ENCODE measurements at regions of chr12 and their contacts with region 1.

Region 1: DNA sequence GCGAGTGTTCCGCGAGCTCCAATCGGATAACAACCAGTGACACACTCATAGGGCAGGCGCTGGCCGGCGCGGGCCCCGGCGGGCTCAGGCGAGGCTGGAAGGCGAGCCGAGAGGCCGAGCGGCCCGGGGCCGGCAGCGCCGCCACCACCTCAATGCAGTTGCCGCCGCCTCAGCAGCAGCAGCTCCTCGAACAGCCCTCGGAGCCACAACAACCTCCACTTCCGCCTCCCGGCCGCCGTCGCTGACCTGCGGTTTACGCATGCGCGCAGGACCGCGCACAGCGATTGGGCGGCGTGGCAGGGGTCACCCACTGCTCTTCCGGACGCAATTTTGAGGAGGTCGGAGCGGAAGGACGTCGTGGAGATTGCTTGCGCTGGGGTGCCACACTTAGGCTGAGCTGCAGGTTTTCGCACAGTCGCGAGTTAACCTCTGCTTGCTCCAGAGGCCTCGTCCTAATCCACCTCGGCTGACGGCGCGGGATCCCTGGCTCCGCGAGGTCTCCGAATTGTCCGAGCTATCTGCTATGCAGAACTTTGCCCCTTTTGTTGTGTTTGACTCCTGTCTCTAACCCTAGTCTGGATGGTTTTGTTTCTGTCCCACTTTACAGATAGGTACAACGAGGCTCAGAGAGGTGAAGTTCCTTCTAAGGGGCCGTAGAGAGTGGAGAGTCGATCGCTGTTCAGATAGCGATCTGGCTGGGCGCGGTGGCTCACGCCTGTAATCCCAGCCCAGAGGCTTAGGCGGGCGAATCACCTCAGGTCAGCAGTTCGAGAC is at the starts of genes ACAD10 and BRAP:
- DNase-seq: peak; percentile 97
- ATAC-seq: peak; percentile 95
- H3K4me3 ChIP-seq: peak within 1 kb of the TSS; percentile 76 to 96 (median 95)
- H3K4me3 Mint-ChIP-seq: peak within 1 kb of the TSS; percentile 96
- H3K27ac ChIP-seq: peak within 1 kb of the TSS; percentile 61 to 80
- H3K27ac Mint-ChIP-seq: peak within 1 kb of the TSS; percentile 97
- H3K4me1 ChIP-seq: peaks cover 23 to 24% of the 10 kb centered on the region in 2 donors
- H3K4me1 Mint-ChIP-seq: peaks cover 31% of the 10 kb centered on the region
- H3K27me3 ChIP-seq: no peaks in the 10 kb centered on the region
- H3K27me3 Mint-ChIP-seq: no peaks in the 10 kb centered on the region
- CTCF ChIP-seq: no peak
- total RNA-seq, gene ACAD10: 48.6 and 55.3 TPM in 2 replicates
- total RNA-seq, gene BRAP: 25.3 and 25.7 TPM in 2 replicates

Region 2: GRCh38 chr12:111599459-111600204 is 86.3 kb before region 1 on chr12:
- CTCF ChIA-PET with region 1: no interaction called
- POLR2A ChIA-PET with region 1: no interaction called
- intact Hi-C with region 1: loop called (anchors 1 kb)
- DNase-seq: peak; percentile 97
- ATAC-seq: peak; percentile 77
- H3K4me3 ChIP-seq: peak overlapping the region; percentile 60 to 92 (median 85)
- H3K4me3 Mint-ChIP-seq: peak overlapping the region; percentile 90
- H3K27ac ChIP-seq: peak overlapping the region; percentile 75 to 87
- H3K27ac Mint-ChIP-seq: peak overlapping the region; percentile 96
- H3K4me1 ChIP-seq: peaks cover 15% of the 10 kb centered on the region in 2 donors
- H3K4me1 Mint-ChIP-seq: peaks cover 28% of the 10 kb centered on the region
- H3K27me3 ChIP-seq: no peaks in the 10 kb centered on the region
- H3K27me3 Mint-ChIP-seq: no peaks in the 10 kb centered on the region
- CTCF ChIP-seq: no peak

Region 3: DNA sequence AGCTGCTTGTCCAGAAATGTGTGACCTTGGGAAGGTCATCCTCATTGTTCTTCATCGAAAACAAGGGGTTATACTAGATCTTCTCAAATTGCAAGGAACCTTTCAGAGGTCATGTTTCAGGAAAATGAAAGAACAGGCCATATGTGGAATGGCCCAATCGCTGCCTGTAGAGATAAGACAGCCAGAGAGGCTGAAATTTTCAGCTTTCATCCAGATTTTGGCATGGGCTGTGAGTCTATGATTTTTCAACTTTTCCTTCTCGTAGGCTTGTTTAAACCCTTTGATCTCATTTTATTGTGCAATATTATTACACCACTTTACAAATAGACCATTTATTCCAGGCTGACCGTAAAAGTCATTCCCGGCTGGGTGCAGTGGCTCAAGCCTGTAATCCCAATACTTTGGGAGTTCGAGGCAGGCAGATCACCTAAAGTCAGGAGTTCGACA is 69.7 kb before region 1 on chr12:
- CTCF ChIA-PET with region 1: no interaction called
- POLR2A ChIA-PET with region 1: no interaction called
- intact Hi-C with region 1: no loop called
- DNase-seq: no peak
- ATAC-seq: no peak
- H3K4me3 ChIP-seq: no peak overlapping the region
- H3K4me3 Mint-ChIP-seq: no peak overlapping the region
- H3K27ac ChIP-seq: no peak overlapping the region
- H3K27ac Mint-ChIP-seq: no peak overlapping the region
- H3K4me1 ChIP-seq: no peaks in the 10 kb centered on the region
- H3K4me1 Mint-ChIP-seq: no peaks in the 10 kb centered on the region
- H3K27me3 ChIP-seq: no peaks in the 10 kb centered on the region
- H3K27me3 Mint-ChIP-seq: no peaks in the 10 kb centered on the region
- CTCF ChIP-seq: no peak

Region 4: DNA sequence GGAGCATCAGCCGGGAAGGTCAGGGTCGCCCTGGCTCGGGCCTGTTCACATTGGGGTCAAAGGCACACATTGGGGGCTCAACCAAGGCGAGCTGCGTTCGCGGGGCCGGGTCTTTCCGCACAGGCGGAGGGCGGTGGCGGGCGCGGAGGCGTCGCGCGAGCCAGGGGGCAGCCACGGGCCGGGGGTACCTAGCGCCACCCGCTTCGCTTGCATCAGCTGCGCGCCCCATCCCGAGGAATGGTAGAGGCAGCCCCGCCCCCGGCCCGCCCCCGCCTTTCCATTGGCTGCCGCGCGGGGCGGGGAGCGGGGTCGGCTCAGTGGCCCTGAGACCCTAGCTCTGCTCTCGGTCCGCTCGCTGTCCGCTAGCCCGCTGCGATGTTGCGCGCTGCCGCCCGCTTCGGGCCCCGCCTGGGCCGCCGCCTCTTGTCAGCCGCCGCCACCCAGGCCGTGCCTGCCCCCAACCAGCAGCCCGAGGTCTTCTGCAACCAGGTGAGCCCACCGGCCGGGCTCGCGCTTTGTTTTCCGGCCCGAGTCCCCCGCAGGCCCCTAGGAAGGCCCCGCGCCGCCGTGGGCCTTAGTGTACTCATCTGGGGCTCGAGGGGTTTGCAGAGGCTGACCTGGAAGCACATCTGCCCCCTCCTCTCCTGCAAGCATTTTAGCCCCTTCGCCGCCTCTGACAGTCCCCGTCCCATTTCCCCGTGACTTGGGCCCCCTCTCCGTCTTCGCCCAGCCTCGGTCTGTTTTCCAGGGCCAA is 80.9 kb after region 1 on chr12 and contains the start of gene ALDH2:
- CTCF ChIA-PET with region 1: no interaction called
- POLR2A ChIA-PET with region 1: no interaction called
- intact Hi-C with region 1: loop called (anchors 5 kb)
- DNase-seq: peak; percentile 68
- ATAC-seq: peak; percentile 79
- H3K4me3 ChIP-seq: peak within 1 kb of the TSS; percentile 2 to 74 (median 62)
- H3K4me3 Mint-ChIP-seq: peak within 1 kb of the TSS; percentile 78
- H3K27ac ChIP-seq: peak within 1 kb of the TSS in 1 of 2 donors; percentile 55
- H3K27ac Mint-ChIP-seq: peak within 1 kb of the TSS; percentile 71
- H3K4me1 ChIP-seq: peaks cover 47 to 53% of the 10 kb centered on the region in 2 donors
- H3K4me1 Mint-ChIP-seq: peaks cover 57% of the 10 kb centered on the region
- H3K27me3 ChIP-seq: no peaks in the 10 kb centered on the region
- H3K27me3 Mint-ChIP-seq: no peaks in the 10 kb centered on the region
- CTCF ChIP-seq: no peak
- total RNA-seq, gene ALDH2: 22.3 TPM in 2 replicates

Region 5: GRCh38 chr12:112418608-112419298 is 732.8 kb after region 1 on chr12 and contains the start of gene PTPN11:
- CTCF ChIA-PET with region 1: no interaction called
- POLR2A ChIA-PET with region 1: no interaction called
- intact Hi-C with region 1: loop called (anchors 10 kb)
- DNase-seq: peak; percentile 95
- ATAC-seq: peak; percentile 84
- H3K4me3 ChIP-seq: peak within 1 kb of the TSS; percentile 77 to 97 (median 95)
- H3K4me3 Mint-ChIP-seq: peak within 1 kb of the TSS; percentile 97
- H3K27ac ChIP-seq: peak within 1 kb of the TSS; percentile 86 to 89
- H3K27ac Mint-ChIP-seq: peak within 1 kb of the TSS; percentile 95
- H3K4me1 ChIP-seq: peaks cover 13 to 18% of the 10 kb centered on the region in 2 donors
- H3K4me1 Mint-ChIP-seq: peaks cover 32% of the 10 kb centered on the region
- H3K27me3 ChIP-seq: no peaks in the 10 kb centered on the region
- H3K27me3 Mint-ChIP-seq: no peaks in the 10 kb centered on the region
- CTCF ChIP-seq: peak; percentile 71
- total RNA-seq, gene PTPN11: 49.8 and 53.1 TPM in 2 replicates

Measured in B cell (primary cell).